ENCODE measurements at regions of chr11 and their contacts with region 1.

Region 1: DNA sequence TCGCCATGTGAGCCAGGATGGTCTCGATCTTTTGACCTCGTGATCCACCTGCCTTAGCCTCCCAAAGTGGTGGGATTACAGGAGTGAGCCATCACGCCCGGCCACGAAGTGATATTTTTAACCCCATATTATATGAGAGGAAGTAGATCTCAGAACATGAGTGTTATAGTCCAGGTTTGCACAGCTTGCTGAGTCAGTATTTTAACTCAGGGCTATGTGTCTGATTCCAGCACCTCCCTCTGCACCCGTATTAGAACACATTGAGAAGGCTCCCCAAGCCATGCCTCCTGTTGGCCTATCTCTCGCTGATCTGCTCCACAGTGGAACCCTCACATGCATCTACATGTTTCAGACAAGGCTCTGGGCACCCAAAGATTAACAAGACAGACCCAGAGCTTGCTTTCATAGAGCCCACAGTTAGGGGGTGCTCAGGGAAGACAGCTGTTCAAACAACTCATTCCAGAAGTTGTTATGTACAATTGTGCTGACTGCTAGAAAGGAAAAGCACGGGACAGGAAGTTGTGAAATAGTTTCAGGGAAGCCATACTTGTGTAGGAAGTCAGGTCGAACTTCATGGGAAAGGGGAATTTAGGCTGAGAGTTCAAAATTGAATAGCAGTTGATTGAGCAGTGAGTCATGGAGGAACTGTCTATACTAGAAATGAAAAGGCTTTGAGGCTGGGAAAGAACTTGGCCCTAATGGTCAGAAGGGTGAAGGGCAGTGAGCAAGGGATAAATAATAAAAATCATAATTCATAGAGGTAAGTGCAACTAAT is 49.3 kb upstream of the CLPB start:
- DNase-seq: no peak
- H3K4me3 ChIP-seq: no peak overlapping the region
- H3K27ac ChIP-seq: peak overlapping the region in 4 of 59 donors; percentile 4 to 47 (median 29)
- H3K27me3 ChIP-seq: no peaks in the 10 kb centered on the region
- CTCF ChIP-seq: peak in 1 of 56 donors; percentile 5

Region 2: GRCh38 chr11:72430741-72431570 is 52.6 kb before region 1 on chr11:
- intact Hi-C with region 1: no loop called
- DNase-seq: peak in 8 of 10 donors; percentile 40 to 68 (median 56)
- H3K4me3 ChIP-seq: peak overlapping the region in 17 of 59 donors; percentile 5 to 32 (median 17)
- H3K27ac ChIP-seq: peak overlapping the region in 11 of 59 donors; percentile 11 to 57 (median 25)
- H3K27me3 ChIP-seq: no peaks in the 10 kb centered on the region
- CTCF ChIP-seq: peak; percentile 58 to 92 (median 84)

Region 3: GRCh38 chr11:72573072-72573854 is 89.7 kb after region 1 on chr11:
- intact Hi-C with region 1: loop called in 1 of 2 experiments (anchors 5 kb)
- DNase-seq: peak in 1 of 10 donors; percentile 28
- H3K4me3 ChIP-seq: no peak overlapping the region
- H3K27ac ChIP-seq: peak overlapping the region in 7 of 59 donors; percentile 5 to 65 (median 26)
- H3K27me3 ChIP-seq: no peaks in the 10 kb centered on the region
- CTCF ChIP-seq: peak in 55 of 56 donors; percentile 31 to 72 (median 57)

Region 4: GRCh38 chr11:72585762-72586311 is 102.2 kb after region 1 on chr11:
- intact Hi-C with region 1: loop called in 1 of 2 experiments (anchors 5 kb)
- DNase-seq: peak in 9 of 10 donors; percentile 54 to 76 (median 67)
- H3K4me3 ChIP-seq: no peak overlapping the region
- H3K27ac ChIP-seq: peak overlapping the region in 6 of 59 donors; percentile 8 to 45 (median 16)
- H3K27me3 ChIP-seq: peaks cover 0 to 15% (median 0%) of the 10 kb centered on the region in 45 donors
- CTCF ChIP-seq: peak; percentile 76 to 98 (median 94)

Region 5: GRCh38 chr11:72642884-72643511 is 159.4 kb after region 1 on chr11:
- intact Hi-C with region 1: loop called in 1 of 2 experiments (anchors 5 kb)
- DNase-seq: peak in 5 of 10 donors; percentile 47 to 81 (median 54)
- H3K4me3 ChIP-seq: peak overlapping the region; percentile 38 to 87 (median 71)
- H3K27ac ChIP-seq: peak overlapping the region in 55 of 59 donors; percentile 5 to 88 (median 73)
- H3K27me3 ChIP-seq: peaks cover 0 to 3% (median 0%) of the 10 kb centered on the region in 45 donors
- CTCF ChIP-seq: peak; percentile 82 to 100 (median 98)

Region 6: DNA sequence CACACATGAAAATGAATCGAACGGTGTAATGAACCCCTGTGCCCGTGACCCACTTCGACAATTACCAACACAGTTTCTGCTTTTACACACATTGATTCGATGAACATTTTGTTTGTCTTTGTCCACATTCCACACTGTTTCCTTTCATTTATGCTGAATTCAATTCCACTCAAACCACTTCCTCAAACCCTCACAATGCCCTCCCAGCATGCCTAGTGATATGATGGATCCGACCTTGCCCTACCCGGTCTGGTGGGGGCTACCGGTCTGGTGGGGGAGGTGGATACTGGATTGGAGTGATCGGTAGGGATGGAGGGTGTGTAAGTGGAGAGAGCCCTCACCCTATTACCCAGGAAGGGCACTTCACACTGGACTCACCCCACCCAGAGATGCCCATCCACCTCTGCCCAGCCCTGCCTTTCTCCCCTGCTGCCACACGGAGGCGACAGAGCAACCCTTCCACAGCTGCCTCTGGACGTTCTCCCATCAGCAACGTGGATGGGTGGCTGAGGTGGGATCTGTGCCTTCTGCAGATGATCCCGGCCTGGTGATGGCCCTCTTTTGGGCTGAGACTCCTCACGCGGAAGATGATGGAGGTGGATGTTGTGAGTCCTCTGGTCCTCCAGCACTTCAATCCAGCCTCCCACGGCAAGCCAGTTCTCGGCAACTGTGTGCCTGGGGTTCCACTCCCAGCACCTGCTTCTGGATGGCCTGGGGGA is 701.5 kb after region 1 on chr11:
- intact Hi-C with region 1: loop called in 1 of 2 experiments (anchors 5 kb)
- DNase-seq: peak in 8 of 10 donors; percentile 24 to 68 (median 48)
- H3K4me3 ChIP-seq: no peak overlapping the region
- H3K27ac ChIP-seq: no peak overlapping the region
- H3K27me3 ChIP-seq: no peaks in the 10 kb centered on the region
- CTCF ChIP-seq: peak in 55 of 56 donors; percentile 18 to 81 (median 69)